ENCODE measurements at regions of chr7 and their contacts with region 1.

Region 1: DNA sequence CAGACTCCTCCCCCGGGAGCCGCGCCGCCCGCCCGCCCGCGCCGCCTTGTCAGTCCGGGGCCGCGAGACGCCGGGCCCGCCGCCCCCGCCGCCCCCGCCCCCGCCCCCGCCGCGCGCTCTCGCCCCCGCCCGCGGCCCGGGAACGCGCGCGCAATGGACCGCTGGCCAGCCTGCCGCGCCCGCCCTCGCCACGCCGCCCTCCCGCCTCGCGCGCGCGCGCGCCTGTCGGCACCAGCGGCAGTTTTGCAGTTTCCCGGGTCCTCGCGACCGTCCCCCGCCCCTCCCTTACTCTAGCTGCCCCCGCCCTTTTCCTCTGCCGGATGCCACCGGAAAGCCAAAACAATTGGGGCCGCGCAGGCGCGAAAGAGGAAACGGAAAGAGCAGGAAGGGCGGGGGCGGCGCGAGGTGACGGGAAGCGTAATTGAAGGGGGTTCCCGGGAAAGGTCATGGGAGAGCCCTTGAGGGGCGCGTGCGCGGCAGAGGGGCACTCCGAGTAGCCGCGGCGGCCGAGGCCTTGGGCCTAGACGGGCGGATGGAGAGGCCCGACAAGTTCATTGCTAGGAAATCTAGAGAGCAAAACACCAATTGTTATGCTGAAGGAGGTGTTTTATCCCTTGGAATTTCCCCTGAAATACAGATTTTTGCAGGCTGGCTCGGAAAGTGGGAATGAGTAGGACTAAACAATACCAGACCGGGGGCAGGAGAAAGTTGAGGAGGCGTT is 400 bp upstream of the KBTBD2 start:
- DNase-seq: peak; percentile 95 to 96
- ATAC-seq: peak; percentile 70 to 75
- H3K4me3 ChIP-seq: peak overlapping the region; percentile 66 to 80 (median 72)
- H3K27ac ChIP-seq: peak overlapping the region; percentile 90 to 99 (median 96)
- H3K4me1 ChIP-seq: peaks cover 33 to 37% of the 10 kb centered on the region in 2 donors
- H3K27me3 ChIP-seq: no peaks in the 10 kb centered on the region
- CTCF ChIP-seq: no peak
- POLR2A ChIP-seq: peak; percentile 35 to 70

Region 2: GRCh38 chr7:32639122-32639521 is 252.8 kb before region 1 on chr7:
- in situ Hi-C with region 1: no loop called
- intact Hi-C with region 1: no loop called
- DNase-seq: no peak
- ATAC-seq: no peak
- H3K4me3 ChIP-seq: no peak overlapping the region
- H3K27ac ChIP-seq: no peak overlapping the region
- H3K4me1 ChIP-seq: no peaks in the 10 kb centered on the region
- H3K27me3 ChIP-seq: no peaks in the 10 kb centered on the region
- CTCF ChIP-seq: no peak
- POLR2A ChIP-seq: no peak

Region 3: DNA sequence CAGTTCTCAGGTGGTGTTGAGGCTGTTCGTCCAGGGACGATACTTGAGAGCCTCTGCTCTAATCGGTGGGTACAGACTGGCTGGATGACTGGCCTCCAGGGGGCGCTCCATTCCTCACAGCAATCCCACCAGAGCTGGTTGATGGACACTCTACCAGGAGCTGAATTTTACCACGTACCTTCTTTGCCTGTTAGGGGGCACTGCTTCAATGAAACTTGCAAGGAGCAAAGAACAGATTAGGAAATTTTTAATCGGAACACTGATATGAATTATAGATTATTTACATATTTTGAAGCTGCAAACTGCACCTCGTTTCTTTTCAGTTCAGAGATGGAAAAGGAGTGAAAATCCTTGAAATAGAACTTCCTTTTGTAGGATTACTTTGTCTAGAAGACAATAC is 45.3 kb before region 1 on chr7:
- in situ Hi-C with region 1: no loop called
- intact Hi-C with region 1: loop called (anchors 5 kb)
- DNase-seq: peak; percentile 76 to 88
- ATAC-seq: peak; percentile 99 to 100
- H3K4me3 ChIP-seq: peak overlapping the region in 1 of 4 donors; percentile 35
- H3K27ac ChIP-seq: no peak overlapping the region
- H3K4me1 ChIP-seq: no peaks in the 10 kb centered on the region
- H3K27me3 ChIP-seq: no peaks in the 10 kb centered on the region
- CTCF ChIP-seq: peak; percentile 88 to 95 (median 90)
- POLR2A ChIP-seq: no peak

Region 4: GRCh38 chr7:32942786-32943653 is 51.1 kb after region 1 on chr7:
- in situ Hi-C with region 1: loop called in 1 of 4 experiments (anchors 10 kb)
- intact Hi-C with region 1: loop called (anchors 2 kb)
- DNase-seq: peak; percentile 52 to 70
- ATAC-seq: peak; percentile 88 to 90
- H3K4me3 ChIP-seq: peak overlapping the region; percentile 71 to 91 (median 80)
- H3K27ac ChIP-seq: peak overlapping the region; percentile 82 to 94 (median 91)
- H3K4me1 ChIP-seq: peaks cover 12 to 23% of the 10 kb centered on the region in 2 donors
- H3K27me3 ChIP-seq: no peaks in the 10 kb centered on the region
- CTCF ChIP-seq: peak; percentile 69 to 87 (median 77)
- POLR2A ChIP-seq: peak; percentile 38 to 39

Region 5: GRCh38 chr7:33040803-33041516 is 149.0 kb after region 1 on chr7:
- in situ Hi-C with region 1: no loop called
- intact Hi-C with region 1: loop called (anchors 2 kb)
- DNase-seq: peak; percentile 73
- ATAC-seq: peak; percentile 90 to 91
- H3K4me3 ChIP-seq: peak overlapping the region; percentile 54 to 68 (median 62)
- H3K27ac ChIP-seq: peak overlapping the region; percentile 84 to 95 (median 90)
- H3K4me1 ChIP-seq: peaks cover 55 to 61% of the 10 kb centered on the region in 2 donors
- H3K27me3 ChIP-seq: no peaks in the 10 kb centered on the region
- CTCF ChIP-seq: no peak
- POLR2A ChIP-seq: peak; percentile 71 to 92

Measured in gastrocnemius medialis (tissue), 4 donors.